Naive thymus-derived CD4-positive, alpha-beta T cell (primary cell): ENCODE measurements at regions of chr12 and their contacts with region 1.

Region 1: DNA sequence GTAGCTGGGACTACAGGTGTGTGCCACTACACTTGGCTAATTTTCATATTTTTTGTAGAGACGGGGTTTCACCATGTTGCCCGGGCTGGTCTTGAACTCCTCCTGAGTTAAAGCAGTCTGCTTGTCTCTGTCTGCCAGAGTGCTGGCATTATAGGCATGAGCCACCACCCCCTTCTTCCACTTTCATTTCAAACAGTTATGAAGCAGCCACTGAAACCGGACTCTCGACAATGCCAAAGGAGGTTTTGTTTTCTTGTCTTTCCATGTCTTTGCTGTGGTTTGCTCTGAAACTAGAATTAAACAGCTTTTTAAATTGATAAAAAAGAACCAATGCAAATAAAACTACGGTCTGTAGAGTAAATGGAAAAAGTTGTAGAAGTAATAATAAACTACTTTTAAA is 30.4 kb downstream of the RAP1B start:
- DNase-seq: peak in 8 of 9 donors; percentile 15 to 45 (median 29)
- ATAC-seq: peak; percentile 73
- H3K4me3 ChIP-seq: no peak overlapping the region
- H3K4me3 Mint-ChIP-seq: peak overlapping the region; percentile 17 to 81 (median 74)
- H3K27ac ChIP-seq: peak overlapping the region; percentile 57
- H3K27ac Mint-ChIP-seq: peak overlapping the region; percentile 39 to 90 (median 83)
- H3K4me1 ChIP-seq: peaks cover 65% of the 10 kb centered on the region in 2 donors
- H3K4me1 Mint-ChIP-seq: peaks cover 47 to 96% (median 86%) of the 10 kb centered on the region in 7 donors
- H3K27me3 ChIP-seq: no peaks in the 10 kb centered on the region
- H3K27me3 Mint-ChIP-seq: no peaks in the 10 kb centered on the region

Region 2: GRCh38 chr12:68628698-68629097 is 12.4 kb before region 1 on chr12:
- CTCF ChIA-PET with region 1: no interaction called
- POLR2A ChIA-PET with region 1: interaction called, 5 read pairs
- intact Hi-C with region 1: loop called (anchors 1 to 2 kb)
- DNase-seq: no peak
- ATAC-seq: peak; percentile 27
- H3K4me3 ChIP-seq: no peak overlapping the region
- H3K4me3 Mint-ChIP-seq: peak overlapping the region in 9 of 10 donors; percentile 44 to 83 (median 76)
- H3K27ac ChIP-seq: peak overlapping the region; percentile 22
- H3K27ac Mint-ChIP-seq: peak overlapping the region in 8 of 9 donors; percentile 55 to 87 (median 82)
- H3K4me1 ChIP-seq: peaks cover 32 to 50% of the 10 kb centered on the region in 2 donors
- H3K4me1 Mint-ChIP-seq: peaks cover 48 to 95% (median 88%) of the 10 kb centered on the region in 7 donors
- H3K27me3 ChIP-seq: no peaks in the 10 kb centered on the region
- H3K27me3 Mint-ChIP-seq: no peaks in the 10 kb centered on the region